Caco-2 (cell line): ENCODE measurements at regions of chr13 and their contacts with region 1.

Region 1: DNA sequence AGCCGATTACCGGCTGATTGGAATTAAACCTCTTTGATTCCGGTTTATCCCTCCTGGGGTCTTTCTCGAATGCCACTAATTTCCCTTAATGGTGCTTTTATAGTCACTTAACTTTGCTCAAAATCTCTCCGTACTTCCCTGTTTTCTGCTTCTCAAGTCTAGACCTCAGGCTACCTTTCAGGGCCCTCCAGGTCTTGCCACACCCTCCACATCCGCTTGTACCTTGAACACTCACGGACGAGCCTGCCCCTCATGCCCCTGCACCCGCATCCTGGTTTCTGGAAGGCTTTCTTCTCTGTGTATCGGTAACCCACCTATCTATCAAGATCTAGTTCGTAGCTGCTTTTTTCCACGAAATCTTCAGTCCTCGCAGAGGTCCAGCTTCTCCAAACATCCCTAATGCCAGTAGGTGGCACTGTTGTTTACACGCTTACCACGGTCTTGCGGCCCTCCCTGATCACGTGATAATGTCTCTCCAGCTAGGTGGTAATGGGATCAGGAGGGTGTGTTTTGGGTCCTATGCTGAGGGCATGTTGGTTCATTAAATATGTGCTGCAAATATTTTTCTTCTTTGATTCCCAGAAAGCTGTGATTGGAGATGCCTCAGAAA is 13.8 kb downstream of the ATP12A start:
- DNase-seq: peak; percentile 76 to 78
- H3K4me3 ChIP-seq: no peak overlapping the region
- H3K4me3 Mint-ChIP-seq: peak overlapping the region; percentile 22
- H3K27ac Mint-ChIP-seq: no peak overlapping the region
- H3K4me1 ChIP-seq: no peaks in the 10 kb centered on the region
- H3K4me1 Mint-ChIP-seq: peaks cover 5% of the 10 kb centered on the region
- H3K27me3 ChIP-seq: no peaks in the 10 kb centered on the region
- H3K27me3 Mint-ChIP-seq: peaks cover 20% of the 10 kb centered on the region
- CTCF ChIP-seq: peak; percentile 75 to 83

Region 2: GRCh38 chr13:23766283-23766682 is 927.7 kb before region 1 on chr13:
- CTCF ChIA-PET with region 1: no interaction called
- POLR2A ChIA-PET with region 1: no interaction called
- intact Hi-C with region 1: no loop called
- DNase-seq: no peak
- H3K4me3 ChIP-seq: no peak overlapping the region
- H3K4me3 Mint-ChIP-seq: no peak overlapping the region
- H3K27ac Mint-ChIP-seq: no peak overlapping the region
- H3K4me1 ChIP-seq: peaks cover 5% of the 10 kb centered on the region; the same call in 1 of the 2 replicates
- H3K4me1 Mint-ChIP-seq: peaks cover 13% of the 10 kb centered on the region
- H3K27me3 ChIP-seq: no peaks in the 10 kb centered on the region
- H3K27me3 Mint-ChIP-seq: no peaks in the 10 kb centered on the region
- CTCF ChIP-seq: no peak

Region 3: DNA sequence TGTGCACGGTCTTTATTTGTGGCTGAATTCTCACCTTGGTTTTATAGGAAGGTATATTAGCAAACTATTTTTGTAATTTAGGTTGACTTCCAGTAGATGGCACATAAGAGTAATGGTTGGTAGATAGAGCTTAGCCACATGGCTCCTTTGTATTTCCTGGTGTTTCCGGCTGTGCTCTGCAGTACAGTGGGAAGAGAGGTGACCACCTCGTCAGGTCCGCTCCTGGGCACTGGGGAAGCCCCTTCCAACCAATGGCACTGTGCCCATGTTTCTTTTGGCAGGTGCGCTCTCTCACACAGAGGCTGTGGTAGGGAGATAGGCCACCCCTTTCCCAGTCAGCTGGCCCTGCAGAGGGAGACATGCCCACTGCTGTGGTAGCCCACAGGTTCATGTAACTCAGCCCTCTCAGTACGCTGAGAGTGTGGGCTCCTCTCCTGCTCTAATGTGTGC is 88.0 kb before region 1 on chr13:
- CTCF ChIA-PET with region 1: no interaction called
- POLR2A ChIA-PET with region 1: no interaction called
- intact Hi-C with region 1: no loop called
- DNase-seq: no peak
- H3K4me3 ChIP-seq: no peak overlapping the region
- H3K4me3 Mint-ChIP-seq: no peak overlapping the region
- H3K27ac Mint-ChIP-seq: no peak overlapping the region
- H3K4me1 ChIP-seq: no peaks in the 10 kb centered on the region
- H3K4me1 Mint-ChIP-seq: no peaks in the 10 kb centered on the region
- H3K27me3 ChIP-seq: no peaks in the 10 kb centered on the region
- H3K27me3 Mint-ChIP-seq: peaks cover 9% of the 10 kb centered on the region
- CTCF ChIP-seq: no peak

Region 4: DNA sequence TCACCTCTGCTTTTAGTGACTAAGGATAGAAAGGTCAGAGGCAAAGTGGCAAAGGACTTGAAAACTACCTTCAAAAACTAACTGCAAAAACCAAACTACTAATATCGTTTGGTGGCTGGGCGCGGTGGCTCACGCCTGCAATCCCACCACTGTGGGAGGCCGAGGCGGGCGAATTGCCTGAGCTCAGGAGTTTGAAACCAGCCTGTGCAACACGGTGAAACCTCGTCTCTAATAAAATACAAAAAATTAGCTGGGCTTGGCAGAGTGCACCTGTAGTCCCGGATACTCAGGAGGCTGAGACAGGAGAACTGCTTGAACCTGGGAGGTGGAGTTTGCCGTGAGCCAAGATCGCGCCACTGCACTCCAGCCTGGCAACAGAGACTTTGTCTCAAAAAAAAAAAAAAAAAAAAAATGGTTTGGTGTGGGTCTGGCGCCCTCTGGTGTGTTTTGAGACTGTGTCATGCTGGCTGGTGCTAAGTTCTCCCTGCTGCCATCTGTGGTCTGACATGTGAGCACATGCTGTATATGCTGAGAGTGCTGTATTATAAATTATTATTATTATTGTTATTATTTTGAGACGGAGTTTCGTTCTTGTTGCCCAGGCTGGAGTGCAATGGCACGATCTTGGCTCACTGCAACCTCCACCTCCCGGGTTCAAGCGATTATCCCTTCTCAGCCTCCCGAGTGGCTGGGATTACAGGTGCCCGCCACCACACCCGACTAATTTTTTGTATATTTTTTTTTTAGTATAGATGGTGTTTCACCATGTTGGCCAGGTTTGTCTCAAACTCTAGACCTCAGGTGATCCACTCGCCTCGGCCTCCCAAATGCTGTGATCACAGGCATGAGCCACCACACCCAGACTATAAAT is 34.0 kb after region 1 on chr13:
- CTCF ChIA-PET with region 1: interaction called, 9 read pairs
- POLR2A ChIA-PET with region 1: no interaction called
- intact Hi-C with region 1: loop called (anchors 1 kb)
- DNase-seq: peak; percentile 69 to 71
- H3K4me3 ChIP-seq: no peak overlapping the region
- H3K4me3 Mint-ChIP-seq: no peak overlapping the region
- H3K27ac Mint-ChIP-seq: no peak overlapping the region
- H3K4me1 ChIP-seq: no peaks in the 10 kb centered on the region
- H3K4me1 Mint-ChIP-seq: no peaks in the 10 kb centered on the region
- H3K27me3 ChIP-seq: no peaks in the 10 kb centered on the region
- H3K27me3 Mint-ChIP-seq: no peaks in the 10 kb centered on the region
- CTCF ChIP-seq: peak; percentile 81

Region 5: GRCh38 chr13:24763596-24764275 is 69.8 kb after region 1 on chr13 and contains the start of gene RNF17:
- CTCF ChIA-PET with region 1: interaction called, 3 read pairs
- POLR2A ChIA-PET with region 1: no interaction called
- intact Hi-C with region 1: loop called (anchors 5 kb)
- DNase-seq: no peak
- H3K4me3 ChIP-seq: no peak within 1 kb of the TSS
- H3K4me3 Mint-ChIP-seq: peak within 1 kb of the TSS; percentile 6
- H3K27ac Mint-ChIP-seq: no peak within 1 kb of the TSS
- H3K4me1 ChIP-seq: no peaks in the 10 kb centered on the region
- H3K4me1 Mint-ChIP-seq: peaks cover 8% of the 10 kb centered on the region
- H3K27me3 ChIP-seq: no peaks in the 10 kb centered on the region
- H3K27me3 Mint-ChIP-seq: peaks cover 5% of the 10 kb centered on the region
- CTCF ChIP-seq: no peak
- total RNA-seq, gene RNF17: 0.14 TPM in 2 replicates

Region 6: GRCh38 chr13:24865163-24865953 is 171.4 kb after region 1 on chr13:
- CTCF ChIA-PET with region 1: no interaction called
- POLR2A ChIA-PET with region 1: no interaction called
- intact Hi-C with region 1: loop called (anchors 10 kb)
- DNase-seq: no peak
- H3K4me3 ChIP-seq: no peak overlapping the region
- H3K4me3 Mint-ChIP-seq: no peak overlapping the region
- H3K27ac Mint-ChIP-seq: no peak overlapping the region
- H3K4me1 ChIP-seq: peaks cover 10% of the 10 kb centered on the region
- H3K4me1 Mint-ChIP-seq: peaks cover 25% of the 10 kb centered on the region
- H3K27me3 ChIP-seq: no peaks in the 10 kb centered on the region
- H3K27me3 Mint-ChIP-seq: no peaks in the 10 kb centered on the region
- CTCF ChIP-seq: no peak

Region 7: DNA sequence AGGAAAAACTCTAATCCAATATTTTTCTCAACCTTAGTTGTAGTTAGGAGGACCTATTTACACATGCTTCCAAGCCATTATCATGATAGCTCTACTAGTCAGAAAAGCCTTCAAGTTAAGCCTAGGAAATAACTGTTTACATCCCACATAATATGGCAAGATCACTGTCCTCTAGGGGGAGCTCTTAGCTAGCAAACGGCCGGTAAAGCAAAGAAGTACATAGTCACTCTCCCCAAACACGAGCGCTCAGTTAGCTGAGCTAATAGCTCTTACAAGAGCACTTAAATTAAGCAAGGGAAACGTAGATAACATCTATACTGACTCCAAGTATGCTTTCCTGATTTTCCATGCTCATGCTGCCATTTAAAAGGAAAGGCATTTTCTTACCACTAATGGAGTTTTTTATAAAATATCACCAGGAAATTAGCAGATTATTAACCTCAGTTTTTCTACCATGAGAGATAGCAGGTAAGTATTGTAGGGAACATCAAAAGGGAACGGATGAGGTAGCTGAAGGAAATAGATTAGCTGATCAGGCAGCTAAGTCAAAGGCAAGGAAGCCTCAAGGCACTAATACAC is 301.3 kb after region 1 on chr13:
- CTCF ChIA-PET with region 1: interaction called, 3 read pairs
- POLR2A ChIA-PET with region 1: no interaction called
- intact Hi-C with region 1: loop called (anchors 1 kb)
- DNase-seq: peak; percentile 79 to 83
- H3K4me3 ChIP-seq: no peak overlapping the region
- H3K4me3 Mint-ChIP-seq: no peak overlapping the region
- H3K27ac Mint-ChIP-seq: no peak overlapping the region
- H3K4me1 ChIP-seq: 0 out of 2 replicates have a peak, but pooled peaks cover 5% of the 10 kb centered on the region
- H3K4me1 Mint-ChIP-seq: no peaks in the 10 kb centered on the region
- H3K27me3 ChIP-seq: no peaks in the 10 kb centered on the region
- H3K27me3 Mint-ChIP-seq: peaks cover 4% of the 10 kb centered on the region
- CTCF ChIP-seq: peak; percentile 83 to 88

Region 8: GRCh38 chr13:25335856-25336255 is 641.9 kb after region 1 on chr13:
- CTCF ChIA-PET with region 1: no interaction called
- POLR2A ChIA-PET with region 1: no interaction called
- intact Hi-C with region 1: no loop called
- DNase-seq: no peak
- H3K4me3 ChIP-seq: no peak overlapping the region
- H3K4me3 Mint-ChIP-seq: no peak overlapping the region
- H3K27ac Mint-ChIP-seq: no peak overlapping the region
- H3K4me1 ChIP-seq: no peaks in the 10 kb centered on the region
- H3K4me1 Mint-ChIP-seq: no peaks in the 10 kb centered on the region
- H3K27me3 ChIP-seq: no peaks in the 10 kb centered on the region
- H3K27me3 Mint-ChIP-seq: no peaks in the 10 kb centered on the region
- CTCF ChIP-seq: no peak